CD8-positive, alpha-beta T cell (primary cell): ENCODE measurements at regions of chr17 and their contacts with region 1.

Region 1: GRCh38 chr17:4366327-4367063 is at the start of gene UBE2G1:
- DNase-seq: peak; percentile 97 to 100 (median 99)
- ATAC-seq: peak; percentile 86
- H3K4me3 ChIP-seq: peak within 1 kb of the TSS; percentile 53 to 64
- H3K4me3 Mint-ChIP-seq: peak within 1 kb of the TSS; percentile 82
- H3K27ac ChIP-seq: peak within 1 kb of the TSS; percentile 63 to 70
- H3K27ac Mint-ChIP-seq: peak within 1 kb of the TSS; percentile 92
- H3K4me1 ChIP-seq: peaks cover 28% of the 10 kb centered on the region
- H3K4me1 Mint-ChIP-seq: peaks cover 24% of the 10 kb centered on the region
- H3K27me3 ChIP-seq: no peaks in the 10 kb centered on the region
- H3K27me3 Mint-ChIP-seq: no peaks in the 10 kb centered on the region
- CTCF ChIP-seq: no peak
- total RNA-seq, gene UBE2G1: 65.8 to 68.0 TPM

Region 2: GRCh38 chr17:2592971-2593820 is 1773.3 kb before region 1 on chr17 and contains the start of gene PAFAH1B1:
- CTCF ChIA-PET with region 1: no interaction called
- POLR2A ChIA-PET with region 1: no interaction called
- intact Hi-C with region 1: loop called in 1 of 2 experiments (anchors 5 kb)
- DNase-seq: peak; percentile 90 to 98 (median 94)
- ATAC-seq: peak; percentile 76
- H3K4me3 ChIP-seq: peak within 1 kb of the TSS; percentile 96 to 97
- H3K4me3 Mint-ChIP-seq: peak within 1 kb of the TSS; percentile 87
- H3K27ac ChIP-seq: peak within 1 kb of the TSS; percentile 86 to 97
- H3K27ac Mint-ChIP-seq: peak within 1 kb of the TSS; percentile 95
- H3K4me1 ChIP-seq: peaks cover 25% of the 10 kb centered on the region
- H3K4me1 Mint-ChIP-seq: peaks cover 33% of the 10 kb centered on the region
- H3K27me3 ChIP-seq: no peaks in the 10 kb centered on the region
- H3K27me3 Mint-ChIP-seq: no peaks in the 10 kb centered on the region
- CTCF ChIP-seq: no peak
- total RNA-seq, gene PAFAH1B1: 139 to 157 TPM

Region 3: DNA sequence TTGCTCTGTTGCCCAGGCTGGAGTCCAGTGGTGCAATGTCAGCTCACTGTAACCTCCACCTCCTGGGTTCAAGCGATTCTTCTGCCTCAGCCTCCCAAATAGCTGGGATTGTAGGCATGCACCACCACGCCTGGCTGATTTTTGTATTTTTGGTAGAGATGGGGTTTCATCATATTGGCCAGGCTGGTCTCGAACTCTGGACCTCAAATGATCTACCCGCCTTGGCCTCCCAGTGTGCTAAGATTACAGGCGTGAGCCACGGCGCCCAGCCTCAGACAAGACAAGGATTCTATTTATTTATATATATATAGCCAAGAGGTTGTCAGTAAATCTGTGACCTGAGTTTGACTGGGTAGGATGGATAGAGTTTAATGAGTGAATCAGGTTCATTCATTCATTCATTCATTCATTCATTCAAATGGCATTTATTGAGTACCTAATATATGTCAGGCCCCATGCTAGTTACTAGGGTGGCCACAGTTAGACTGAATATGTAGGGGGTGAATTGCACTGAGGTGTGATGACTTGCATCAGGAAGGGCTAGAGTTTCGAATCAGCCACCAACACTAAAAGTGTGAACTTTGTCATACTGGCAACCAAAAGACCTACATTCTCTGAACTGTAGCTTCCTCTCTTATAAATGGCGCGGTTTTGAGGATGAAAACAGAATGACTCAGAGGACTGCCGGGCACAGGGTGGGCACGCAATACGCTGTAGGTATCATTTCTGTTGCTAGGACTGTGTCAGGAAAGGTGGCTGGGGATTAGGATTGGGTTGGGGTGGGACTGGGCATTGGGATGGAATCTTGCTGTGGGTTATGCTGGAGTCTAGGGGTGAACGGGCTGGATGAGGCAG is 603.3 kb before region 1 on chr17:
- CTCF ChIA-PET with region 1: no interaction called
- POLR2A ChIA-PET with region 1: no interaction called
- intact Hi-C with region 1: loop called in 1 of 2 experiments (anchors 5 kb)
- DNase-seq: peak in 4 of 9 experiments; percentile 44 to 88 (median 75)
- ATAC-seq: peak; percentile 30
- H3K4me3 ChIP-seq: peak overlapping the region; percentile 16 to 45
- H3K4me3 Mint-ChIP-seq: peak overlapping the region; percentile 82
- H3K27ac ChIP-seq: peak overlapping the region; percentile 42 to 70
- H3K27ac Mint-ChIP-seq: peak overlapping the region; percentile 97
- H3K4me1 ChIP-seq: peaks cover 52% of the 10 kb centered on the region
- H3K4me1 Mint-ChIP-seq: peaks cover 50% of the 10 kb centered on the region
- H3K27me3 ChIP-seq: no peaks in the 10 kb centered on the region
- H3K27me3 Mint-ChIP-seq: no peaks in the 10 kb centered on the region
- CTCF ChIP-seq: no peak

Region 4: DNA sequence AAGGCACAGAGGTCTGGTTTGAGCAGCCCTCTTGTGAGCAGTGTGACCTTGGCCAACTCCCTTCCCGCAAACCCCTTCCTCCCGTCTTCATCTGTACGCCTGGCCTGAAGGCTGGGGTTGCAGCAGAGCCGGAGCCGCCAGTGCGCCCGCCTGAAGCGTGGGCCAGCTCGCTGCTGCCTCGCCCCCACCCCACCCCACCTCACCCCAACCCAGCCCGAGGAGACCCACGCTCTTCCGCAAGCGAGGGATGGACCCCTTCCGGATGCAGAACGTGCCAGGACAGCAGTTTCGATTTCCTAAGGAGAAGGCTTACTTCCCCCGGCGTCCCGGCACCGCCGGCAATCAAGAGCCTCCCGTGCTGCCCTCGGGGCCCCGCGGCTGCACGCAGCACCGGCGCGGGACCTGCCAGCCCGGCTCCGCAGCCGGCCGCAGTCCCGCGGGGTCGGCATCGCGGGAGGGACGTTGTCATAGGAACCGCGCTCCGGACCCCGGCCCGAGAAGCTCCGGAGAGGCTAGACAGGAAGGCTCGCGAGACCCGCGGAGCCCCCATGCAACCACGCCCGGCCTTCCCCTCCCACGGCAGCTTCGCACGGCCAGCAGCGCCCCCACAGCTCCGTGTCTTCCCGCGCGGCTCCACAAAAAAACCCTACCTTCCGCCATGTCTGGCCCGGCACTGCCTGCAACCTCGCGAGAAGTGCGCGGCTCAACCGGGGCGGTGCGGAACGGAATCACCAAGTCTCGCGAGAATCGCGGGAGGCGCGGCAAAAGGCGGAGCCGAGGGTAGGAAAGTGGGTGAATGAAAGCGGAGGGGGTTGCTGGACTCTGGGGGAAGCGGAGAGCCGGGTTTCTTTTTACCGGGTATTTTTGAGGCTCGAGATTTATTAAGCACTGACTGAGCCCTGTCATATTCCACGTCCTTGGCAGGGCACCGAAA is 102.9 kb before region 1 on chr17 and contains the start of gene ANKFY1:
- CTCF ChIA-PET with region 1: interaction called, 4 read pairs
- POLR2A ChIA-PET with region 1: interaction called, 3 read pairs
- intact Hi-C with region 1: loop called (anchors 1 kb)
- DNase-seq: peak; percentile 95 to 98 (median 97)
- ATAC-seq: peak; percentile 95
- H3K4me3 ChIP-seq: peak within 1 kb of the TSS; percentile 86 to 99
- H3K4me3 Mint-ChIP-seq: peak within 1 kb of the TSS; percentile 90
- H3K27ac ChIP-seq: peak within 1 kb of the TSS; percentile 81 to 88
- H3K27ac Mint-ChIP-seq: peak within 1 kb of the TSS; percentile 91
- H3K4me1 ChIP-seq: peaks cover 21% of the 10 kb centered on the region
- H3K4me1 Mint-ChIP-seq: peaks cover 40% of the 10 kb centered on the region
- H3K27me3 ChIP-seq: no peaks in the 10 kb centered on the region
- H3K27me3 Mint-ChIP-seq: no peaks in the 10 kb centered on the region
- CTCF ChIP-seq: no peak
- total RNA-seq, gene ANKFY1: 26.2 to 28.6 TPM

Region 5: DNA sequence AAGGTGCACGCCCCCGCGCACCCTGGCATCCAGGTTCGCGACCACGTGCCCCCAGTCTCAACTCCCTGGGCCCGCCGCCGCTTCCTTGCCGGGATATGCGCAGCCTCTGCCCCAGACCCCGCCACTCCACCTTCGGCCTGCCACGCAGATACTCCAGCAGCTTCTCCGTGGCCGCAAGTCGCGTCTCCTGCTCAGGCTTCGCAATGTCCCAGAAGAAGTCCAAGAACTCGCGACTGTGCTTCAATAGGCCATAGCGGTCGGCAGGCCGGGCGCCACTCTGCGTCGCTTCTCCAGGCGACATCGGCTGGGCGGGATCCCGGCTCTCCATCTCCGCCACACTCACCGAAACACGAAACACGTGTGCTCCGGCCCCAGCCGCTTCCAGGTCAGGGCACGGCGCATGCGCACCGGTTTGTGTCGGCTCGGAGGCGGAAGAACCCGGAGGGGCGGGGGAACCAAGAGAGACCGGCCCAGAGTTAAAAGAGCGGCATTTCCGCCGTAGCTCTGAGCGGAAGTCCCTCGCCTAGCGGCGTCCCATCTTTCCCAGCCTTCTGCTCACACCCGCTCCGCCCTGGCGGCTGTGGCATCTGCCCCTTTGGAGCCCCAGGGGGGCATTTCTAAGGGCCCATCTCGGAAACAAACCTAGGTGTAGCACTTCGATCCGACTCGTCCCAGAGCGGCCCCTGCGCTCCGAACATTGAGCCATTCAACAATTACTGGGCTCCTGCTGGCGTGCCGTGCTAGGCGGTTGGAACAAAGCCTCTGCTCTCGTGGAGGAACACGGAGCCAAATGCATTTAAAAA is 188.7 kb after region 1 on chr17 and contains the start of gene MYBBP1A:
- CTCF ChIA-PET with region 1: no interaction called
- POLR2A ChIA-PET with region 1: no interaction called
- intact Hi-C with region 1: loop called (anchors 5 kb)
- DNase-seq: peak; percentile 91 to 99 (median 98)
- ATAC-seq: peak; percentile 93
- H3K4me3 ChIP-seq: peak within 1 kb of the TSS; percentile 80 to 100
- H3K4me3 Mint-ChIP-seq: peak within 1 kb of the TSS; percentile 94
- H3K27ac ChIP-seq: peak within 1 kb of the TSS; percentile 77 to 88
- H3K27ac Mint-ChIP-seq: peak within 1 kb of the TSS; percentile 95
- H3K4me1 ChIP-seq: peaks cover 26% of the 10 kb centered on the region
- H3K4me1 Mint-ChIP-seq: peaks cover 27% of the 10 kb centered on the region
- H3K27me3 ChIP-seq: no peaks in the 10 kb centered on the region
- H3K27me3 Mint-ChIP-seq: no peaks in the 10 kb centered on the region
- CTCF ChIP-seq: no peak
- total RNA-seq, gene MYBBP1A: 69.8 to 71.8 TPM

Region 6: DNA sequence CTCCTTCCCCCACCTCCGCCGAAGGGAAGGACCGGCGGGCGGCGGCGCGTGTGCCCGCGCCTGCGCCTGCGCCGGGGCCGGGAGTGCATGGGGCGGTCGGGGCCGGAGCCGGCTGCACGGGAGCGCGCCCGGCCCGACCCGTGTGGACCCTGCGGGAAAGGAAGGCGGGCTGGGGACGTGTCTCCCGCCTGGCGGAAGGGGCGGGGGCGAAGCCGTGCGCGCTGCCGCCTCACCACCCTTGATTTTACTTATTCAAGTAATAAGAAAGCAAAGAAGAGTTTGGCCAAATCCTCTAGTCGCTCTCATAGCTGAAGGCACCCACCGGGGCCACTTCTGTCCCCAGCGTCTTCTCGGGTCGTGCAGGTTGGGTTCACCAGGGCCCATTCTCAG is 582.4 kb after region 1 on chr17:
- CTCF ChIA-PET with region 1: no interaction called
- POLR2A ChIA-PET with region 1: no interaction called
- intact Hi-C with region 1: loop called in 1 of 2 experiments (anchors 5 kb)
- DNase-seq: peak; percentile 44 to 90 (median 70)
- ATAC-seq: peak; percentile 26
- H3K4me3 ChIP-seq: peak overlapping the region; percentile 99 to 100
- H3K4me3 Mint-ChIP-seq: peak overlapping the region; percentile 94
- H3K27ac ChIP-seq: peak overlapping the region; percentile 72 to 81
- H3K27ac Mint-ChIP-seq: peak overlapping the region; percentile 93
- H3K4me1 ChIP-seq: peaks cover 38% of the 10 kb centered on the region
- H3K4me1 Mint-ChIP-seq: peaks cover 45% of the 10 kb centered on the region
- H3K27me3 ChIP-seq: no peaks in the 10 kb centered on the region
- H3K27me3 Mint-ChIP-seq: no peaks in the 10 kb centered on the region
- CTCF ChIP-seq: no peak